Activated T-helper 2 cell treated with anti-CD3 and anti-CD28 coated beads, Interferon-gamma antibody, Interleukin-2, Interleukin-4, amounts not matched to agents 10 μg/mL and 5 μg/mL and 100 μg/mL, durations not matched to agents 14 hours and 24 hours and 36 hours (primary cell): ENCODE measurements at regions of chr5 and their contacts with region 1.

Region 1: GRCh38 chr5:91219803-91220371 is 163.2 kb downstream of the ARRDC3 start:
- DNase-seq: no peak
- H3K4me3 Mint-ChIP-seq: no peak overlapping the region
- H3K27ac Mint-ChIP-seq: no peak overlapping the region
- H3K4me1 Mint-ChIP-seq: peaks cover 3% of the 10 kb centered on the region
- H3K27me3 Mint-ChIP-seq: peaks cover 13% of the 10 kb centered on the region

Region 2: DNA sequence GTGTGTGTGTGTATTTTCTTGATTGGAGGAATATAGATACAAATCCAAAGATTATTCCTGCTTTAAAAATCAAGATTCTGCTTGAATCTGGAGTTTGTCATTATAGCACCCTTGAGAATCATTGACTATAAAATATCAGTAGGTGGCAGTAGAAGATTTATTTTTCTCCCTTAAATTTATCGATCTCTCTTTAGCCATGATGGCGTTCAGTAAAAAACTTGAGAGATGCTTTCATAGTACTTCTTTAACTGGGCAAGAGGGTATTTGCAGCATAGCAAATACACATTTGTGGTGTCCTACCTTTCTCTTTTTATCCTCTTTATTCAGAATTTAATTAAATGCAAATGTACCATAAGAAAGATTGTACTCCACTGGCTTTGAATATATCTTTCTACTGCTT is 353.6 kb before region 1 on chr5:
- intact Hi-C with region 1: loop called (anchors 2 kb)
- DNase-seq: no peak
- H3K4me3 Mint-ChIP-seq: no peak overlapping the region
- H3K27ac Mint-ChIP-seq: no peak overlapping the region
- H3K4me1 Mint-ChIP-seq: peaks cover 9% of the 10 kb centered on the region
- H3K27me3 Mint-ChIP-seq: peaks cover 15% of the 10 kb centered on the region

Region 3: DNA sequence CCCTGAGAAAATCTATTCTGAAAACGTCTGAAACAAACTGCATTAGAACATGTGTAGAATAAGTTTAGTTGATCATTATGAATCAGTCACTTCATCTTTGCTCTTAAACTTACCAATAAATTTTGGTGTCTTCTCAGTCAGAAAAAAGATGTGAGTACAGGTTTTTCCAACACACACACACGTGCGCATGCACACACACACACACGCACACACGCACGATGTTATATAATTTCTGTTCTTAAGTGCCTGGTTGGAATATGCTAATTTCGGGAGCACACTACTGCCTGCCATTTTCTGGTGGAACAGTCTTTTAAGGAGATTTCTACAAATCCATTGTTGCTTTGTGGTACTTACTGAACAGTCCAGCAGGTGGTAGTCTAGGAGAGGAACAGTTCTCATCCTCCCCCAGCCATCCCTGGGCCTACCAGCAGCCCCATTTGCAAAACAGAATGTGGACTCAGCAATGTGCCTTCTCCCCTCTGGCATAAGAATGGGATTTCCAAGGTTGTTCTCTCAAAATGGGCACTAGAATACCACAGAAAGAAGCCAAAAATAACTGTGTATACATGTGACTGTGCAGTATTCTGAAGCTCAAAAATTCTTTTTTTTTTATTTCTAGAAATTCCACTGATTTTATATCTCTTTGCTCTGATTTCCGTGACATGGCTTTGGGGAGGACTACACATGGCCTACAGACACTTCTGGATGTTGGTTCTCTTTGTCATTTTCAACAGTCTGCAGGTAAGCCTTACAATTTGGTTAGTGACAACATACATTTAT is 118.1 kb before region 1 on chr5:
- intact Hi-C with region 1: loop called (anchors 2 kb)
- DNase-seq: peak; percentile 33
- H3K4me3 Mint-ChIP-seq: no peak overlapping the region
- H3K27ac Mint-ChIP-seq: no peak overlapping the region
- H3K4me1 Mint-ChIP-seq: peaks cover 2% of the 10 kb centered on the region
- H3K27me3 Mint-ChIP-seq: peaks cover 9% of the 10 kb centered on the region

Region 4: DNA sequence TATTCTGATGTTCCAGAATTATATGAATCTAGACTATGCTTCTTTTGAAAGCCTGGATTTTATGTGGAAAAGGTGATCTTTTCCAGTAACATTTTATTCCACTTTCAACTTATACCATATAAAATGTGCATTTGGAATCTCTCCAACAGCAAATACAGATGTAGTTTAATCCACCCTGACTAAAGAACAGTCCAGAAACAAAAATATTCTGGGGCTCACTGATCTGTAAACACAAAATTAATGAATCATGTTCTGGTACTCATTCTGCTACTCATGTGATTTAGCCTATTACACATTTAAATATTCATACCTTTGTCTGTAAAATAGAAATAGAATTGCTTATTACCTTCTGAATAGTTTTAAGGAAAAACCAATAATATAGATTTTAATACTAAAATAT is 37.4 kb after region 1 on chr5:
- intact Hi-C with region 1: no loop called
- DNase-seq: no peak
- H3K4me3 Mint-ChIP-seq: no peak overlapping the region
- H3K27ac Mint-ChIP-seq: no peak overlapping the region
- H3K4me1 Mint-ChIP-seq: no peaks in the 10 kb centered on the region
- H3K27me3 Mint-ChIP-seq: peaks cover 20% of the 10 kb centered on the region

Region 5: DNA sequence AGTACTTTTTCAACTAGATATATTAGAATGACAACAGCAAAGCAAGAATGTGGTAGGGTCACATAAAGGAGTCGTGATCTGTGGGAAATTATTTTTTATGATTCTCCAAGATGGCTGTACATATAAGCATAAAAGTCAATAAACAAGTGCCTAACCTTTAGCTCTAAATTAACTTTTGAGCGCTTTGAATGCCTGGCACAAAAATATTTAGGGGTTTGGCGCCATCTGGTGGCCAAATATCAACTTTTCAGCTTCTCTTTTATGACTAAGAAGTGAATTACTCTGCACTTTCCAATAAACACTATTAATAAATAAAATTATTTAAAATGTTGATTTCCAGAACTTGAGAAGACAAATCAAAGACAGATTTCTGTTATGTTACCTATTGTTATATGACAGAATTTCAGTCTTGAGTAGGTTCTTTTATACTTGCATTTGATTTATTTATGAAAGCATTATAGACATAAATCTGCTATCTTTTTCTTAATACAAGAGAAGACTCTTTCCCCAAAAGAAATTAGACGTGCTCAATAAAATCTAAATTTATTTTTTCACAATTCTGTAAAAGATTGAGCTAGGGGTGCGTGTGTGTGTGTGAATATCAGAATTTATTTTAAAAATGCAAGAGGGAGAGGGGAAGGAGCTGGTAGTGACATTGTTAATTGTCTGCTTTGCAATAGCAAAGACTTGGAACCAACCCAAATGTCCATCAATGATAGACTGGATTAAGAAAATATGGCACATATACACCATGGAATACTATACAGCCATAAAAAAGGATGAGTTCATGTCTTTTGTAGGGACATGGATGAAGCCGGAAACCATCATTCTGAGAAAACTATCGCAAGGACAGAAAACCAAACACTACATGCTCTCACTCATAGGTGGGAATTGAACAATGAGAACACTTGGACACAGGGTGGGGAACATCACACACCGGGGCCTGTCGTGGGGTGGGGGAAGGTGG is 200.0 kb after region 1 on chr5:
- intact Hi-C with region 1: no loop called
- DNase-seq: peak; percentile 43
- H3K4me3 Mint-ChIP-seq: no peak overlapping the region
- H3K27ac Mint-ChIP-seq: no peak overlapping the region
- H3K4me1 Mint-ChIP-seq: peaks cover 11% of the 10 kb centered on the region
- H3K27me3 Mint-ChIP-seq: peaks cover 2% of the 10 kb centered on the region